Right lobe of liver (tissue), 6 donors: ENCODE measurements at regions of chr11 and their contacts with region 1.

Region 1: DNA sequence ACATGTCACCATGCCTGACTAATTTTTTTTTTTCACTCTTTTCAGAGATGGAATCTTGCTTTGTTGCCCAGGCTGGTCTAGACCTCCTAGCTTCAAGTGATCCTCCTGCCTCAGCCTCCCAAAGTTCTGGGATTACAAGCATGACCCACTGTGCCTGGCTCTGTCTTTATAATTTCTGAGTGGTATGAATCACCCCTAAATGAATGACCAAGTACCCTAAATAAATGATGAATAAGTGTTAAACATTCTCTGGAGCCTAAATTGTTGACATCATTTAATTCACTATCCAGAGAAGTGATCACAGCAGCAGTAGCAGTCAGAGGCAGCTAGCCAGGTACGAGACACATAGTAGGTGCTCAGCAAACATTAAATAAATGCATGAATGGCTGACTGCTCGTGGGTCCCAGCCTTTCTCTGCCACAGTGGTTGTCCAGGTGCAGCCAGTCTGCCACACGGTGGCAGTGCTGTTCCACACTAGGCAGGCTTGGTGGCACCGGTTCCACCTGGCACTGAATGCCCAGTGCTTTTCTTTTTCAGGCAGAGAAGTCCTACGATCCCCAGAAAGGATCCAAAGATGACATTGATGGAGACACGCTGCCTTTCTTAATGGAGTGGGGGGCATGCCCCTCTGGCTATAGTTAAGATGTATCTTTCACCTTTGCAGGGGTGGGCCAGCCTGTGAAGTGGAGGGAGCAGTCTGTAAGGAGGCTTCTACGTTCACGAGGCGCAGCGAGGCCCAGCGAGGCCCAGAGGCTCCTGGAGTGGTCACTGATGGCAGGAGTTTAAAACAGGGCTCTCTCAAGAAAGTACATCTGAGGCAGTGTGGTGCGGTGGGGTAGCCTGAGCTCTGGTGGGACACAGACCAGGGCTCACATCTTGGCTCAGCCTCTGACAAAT is 8.7 kb upstream of the TTC12 start:
- DNase-seq: peak; percentile 79 to 85 (median 81)
- ATAC-seq: peak; percentile 98 to 99 (median 99)
- H3K4me3 ChIP-seq: no peak overlapping the region
- H3K27ac ChIP-seq: no peak overlapping the region
- H3K4me1 ChIP-seq: no peaks in the 10 kb centered on the region
- H3K27me3 ChIP-seq: no peaks in the 10 kb centered on the region
- CTCF ChIP-seq: peak; percentile 91 to 97 (median 93)
- POLR2A ChIP-seq: no peak

Region 2: DNA sequence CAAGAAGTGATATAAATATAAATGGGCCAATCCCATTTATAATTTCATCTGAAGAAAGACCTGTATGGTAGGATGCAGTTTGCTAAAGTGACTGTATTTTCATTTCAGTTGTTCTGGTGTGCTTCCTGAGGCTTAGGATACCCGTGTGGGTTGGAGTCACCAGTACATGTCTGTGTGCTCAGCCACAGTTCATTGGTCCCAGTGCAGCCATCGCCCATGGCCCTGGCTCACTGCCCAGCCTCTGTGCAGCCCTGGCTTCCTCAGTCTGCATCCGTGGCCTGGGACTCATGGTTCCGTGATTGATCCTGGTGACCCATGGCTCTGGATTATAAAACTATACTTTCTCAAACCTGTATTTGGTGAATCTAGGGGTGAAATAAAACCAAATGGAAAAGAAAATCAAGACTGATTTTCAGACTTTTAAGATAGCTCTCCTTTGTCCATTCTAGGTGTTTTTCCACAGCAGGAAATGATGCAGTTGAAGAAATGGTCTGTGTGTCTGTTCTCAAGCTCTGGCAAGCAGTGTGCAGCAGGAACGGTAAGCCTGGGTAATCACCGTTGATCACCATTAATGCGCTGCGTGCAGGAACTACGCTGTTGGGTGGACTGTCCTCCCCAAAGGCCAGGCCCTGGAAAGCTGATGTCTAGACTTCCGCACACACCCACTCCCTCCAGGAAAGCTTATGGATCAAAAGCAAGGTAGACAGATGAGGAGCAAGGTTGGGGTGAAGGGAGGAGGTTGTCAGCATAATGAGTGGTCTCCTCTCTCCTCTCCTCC is 35.9 kb after region 1 on chr11:
- intact Hi-C with region 1: no loop called
- DNase-seq: no peak
- ATAC-seq: peak in 2 of 4 donors; percentile 35 to 41
- H3K4me3 ChIP-seq: no peak overlapping the region
- H3K27ac ChIP-seq: no peak overlapping the region
- H3K4me1 ChIP-seq: no peaks in the 10 kb centered on the region
- H3K27me3 ChIP-seq: no peaks in the 10 kb centered on the region
- CTCF ChIP-seq: no peak
- POLR2A ChIP-seq: no peak

Region 3: GRCh38 chr11:113532697-113533424 is 227.2 kb after region 1 on chr11:
- intact Hi-C with region 1: loop called (anchors 5 kb)
- DNase-seq: peak; percentile 74 to 77 (median 76)
- ATAC-seq: peak; percentile 90 to 96 (median 94)
- H3K4me3 ChIP-seq: no peak overlapping the region
- H3K27ac ChIP-seq: no peak overlapping the region
- H3K4me1 ChIP-seq: no peaks in the 10 kb centered on the region
- H3K27me3 ChIP-seq: no peaks in the 10 kb centered on the region
- CTCF ChIP-seq: peak; percentile 67 to 87 (median 84)
- POLR2A ChIP-seq: no peak